ENCODE measurements at regions of chrX and their contacts with region 1.

Region 1: DNA sequence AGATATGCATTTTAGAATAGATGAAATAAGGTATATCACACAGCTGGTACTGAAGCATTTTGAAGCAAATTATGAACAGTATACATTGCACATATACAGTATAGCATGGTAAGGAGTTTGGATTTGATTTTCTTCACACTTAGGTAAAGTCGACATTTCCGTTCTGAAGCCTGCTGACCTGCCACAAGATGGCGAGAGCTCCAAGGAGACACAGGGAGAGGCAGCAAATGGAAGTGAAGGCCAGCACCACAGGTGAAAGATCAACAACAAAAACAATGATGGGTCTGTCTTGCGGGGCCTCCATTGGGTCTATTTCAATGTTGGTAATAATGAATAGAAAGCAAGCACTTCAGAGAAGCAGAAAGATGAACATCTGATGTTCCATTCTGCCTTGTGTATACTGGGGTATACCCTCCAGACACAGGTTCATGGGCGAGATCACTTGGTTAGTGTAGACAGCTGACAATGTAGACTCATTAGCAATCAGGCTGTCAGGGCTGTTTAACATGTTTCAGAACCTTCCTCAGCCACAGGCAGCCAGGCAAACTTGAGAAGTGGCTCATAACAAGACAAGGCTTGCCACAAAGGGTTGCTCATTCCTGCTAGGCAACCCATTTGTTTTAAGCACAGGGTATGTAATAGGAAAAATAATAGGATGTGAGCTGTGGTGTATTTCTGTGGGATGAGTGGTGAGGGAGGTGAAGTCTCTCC is 21.4 kb upstream of the NOX1 start:
- DNase-seq: no peak
- ATAC-seq: no peak
- H3K4me3 Mint-ChIP-seq: no peak overlapping the region
- H3K27ac Mint-ChIP-seq: no peak overlapping the region
- H3K4me1 Mint-ChIP-seq: peaks cover 9% of the 10 kb centered on the region
- H3K27me3 Mint-ChIP-seq: no peaks in the 10 kb centered on the region
- CTCF ChIP-seq: no peak

Region 2: GRCh38 chrX:100494646-100495370 is 400.7 kb before region 1 on chrX:
- CTCF ChIA-PET with region 1: no interaction called
- POLR2A ChIA-PET with region 1: no interaction called
- intact Hi-C with region 1: no loop called
- DNase-seq: no peak
- ATAC-seq: no peak
- H3K4me3 Mint-ChIP-seq: no peak overlapping the region
- H3K27ac Mint-ChIP-seq: no peak overlapping the region
- H3K4me1 Mint-ChIP-seq: no peaks in the 10 kb centered on the region
- H3K27me3 Mint-ChIP-seq: no peaks in the 10 kb centered on the region
- CTCF ChIP-seq: no peak

Region 3: GRCh38 chrX:100915007-100915406 is 19.5 kb after region 1 on chrX:
- CTCF ChIA-PET with region 1: no interaction called
- POLR2A ChIA-PET with region 1: no interaction called
- intact Hi-C with region 1: no loop called
- DNase-seq: no peak
- ATAC-seq: no peak
- H3K4me3 Mint-ChIP-seq: no peak overlapping the region
- H3K27ac Mint-ChIP-seq: no peak overlapping the region
- H3K4me1 Mint-ChIP-seq: peaks cover 10% of the 10 kb centered on the region
- H3K27me3 Mint-ChIP-seq: no peaks in the 10 kb centered on the region
- CTCF ChIP-seq: no peak

Region 4: DNA sequence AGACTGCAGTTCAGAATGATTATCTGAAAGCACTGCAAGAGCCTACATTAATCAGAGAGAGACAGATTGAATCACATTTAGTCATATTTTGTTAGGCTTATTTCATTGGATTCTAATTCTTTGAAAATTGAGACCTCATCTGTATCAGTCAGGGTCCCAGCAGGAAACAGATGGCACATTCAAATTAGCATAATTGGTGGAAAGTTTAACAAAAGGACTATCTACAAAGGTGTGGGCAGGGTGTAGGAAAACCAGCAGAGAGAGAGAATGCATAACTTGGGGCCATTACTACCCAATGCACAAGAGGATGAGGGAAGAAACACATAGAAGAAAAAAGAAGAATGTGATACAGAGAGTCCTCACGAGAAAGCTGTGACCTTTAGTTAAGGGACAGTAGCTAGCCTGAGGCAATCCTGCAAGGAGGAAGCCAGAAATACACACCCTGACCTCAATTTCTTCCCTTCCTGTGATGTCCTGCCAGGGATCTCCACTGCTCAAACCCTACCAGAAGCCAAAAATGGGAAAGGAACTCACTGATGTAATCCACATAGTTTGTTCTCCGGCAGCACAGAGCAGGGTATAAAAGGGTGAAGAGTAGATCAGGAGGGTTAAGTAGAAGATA is 50.9 kb after region 1 on chrX:
- CTCF ChIA-PET with region 1: no interaction called
- POLR2A ChIA-PET with region 1: no interaction called
- intact Hi-C with region 1: no loop called
- DNase-seq: no peak
- ATAC-seq: no peak
- H3K4me3 Mint-ChIP-seq: no peak overlapping the region
- H3K27ac Mint-ChIP-seq: no peak overlapping the region
- H3K4me1 Mint-ChIP-seq: no peaks in the 10 kb centered on the region
- H3K27me3 Mint-ChIP-seq: no peaks in the 10 kb centered on the region
- CTCF ChIP-seq: no peak

Region 5: GRCh38 chrX:101206471-101206870 is 311.0 kb after region 1 on chrX:
- CTCF ChIA-PET with region 1: no interaction called
- POLR2A ChIA-PET with region 1: no interaction called
- intact Hi-C with region 1: loop called (anchors 1 kb)
- DNase-seq: no peak
- ATAC-seq: peak; percentile 73
- H3K4me3 Mint-ChIP-seq: no peak overlapping the region
- H3K27ac Mint-ChIP-seq: no peak overlapping the region
- H3K4me1 Mint-ChIP-seq: peaks cover 16% of the 10 kb centered on the region
- H3K27me3 Mint-ChIP-seq: no peaks in the 10 kb centered on the region
- CTCF ChIP-seq: no peak

Region 6: DNA sequence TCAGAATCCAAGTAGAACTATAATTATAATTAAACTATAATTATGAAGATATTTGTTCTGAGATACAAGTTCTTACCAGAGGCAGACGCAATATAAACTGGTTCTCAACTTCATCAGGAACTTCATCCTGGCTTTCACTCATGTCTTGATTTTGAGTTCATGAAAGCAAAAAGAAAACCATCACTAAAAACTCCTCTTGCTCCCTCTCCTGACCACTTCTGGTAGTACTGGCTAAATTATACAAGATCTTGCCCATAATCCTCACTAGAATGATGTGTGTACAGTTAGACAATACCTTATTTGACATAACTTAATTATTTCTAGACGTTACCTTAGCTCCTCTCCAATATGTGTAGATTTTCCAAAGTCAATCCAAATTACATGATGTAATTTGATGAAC is 391.9 kb after region 1 on chrX:
- CTCF ChIA-PET with region 1: no interaction called
- POLR2A ChIA-PET with region 1: no interaction called
- intact Hi-C with region 1: loop called (anchors 1 kb)
- DNase-seq: no peak
- ATAC-seq: peak; percentile 57
- H3K4me3 Mint-ChIP-seq: no peak overlapping the region
- H3K27ac Mint-ChIP-seq: no peak overlapping the region
- H3K4me1 Mint-ChIP-seq: no peaks in the 10 kb centered on the region
- H3K27me3 Mint-ChIP-seq: peaks cover 1% of the 10 kb centered on the region
- CTCF ChIP-seq: no peak

Measured in activated B cell treated with CpG ODN at 0.5 μM for 24 hours (primary cell).